ENCODE measurements at regions of chr14 and their contacts with region 1.

Region 1: GRCh38 chr14:71967704-71968103 is 35.5 kb downstream of the RGS6 start:
- DNase-seq: no peak
- H3K4me3 Mint-ChIP-seq: peak overlapping the region; percentile 63
- H3K27ac Mint-ChIP-seq: peak overlapping the region; percentile 90
- H3K4me1 Mint-ChIP-seq: peaks cover 11% of the 10 kb centered on the region
- H3K27me3 Mint-ChIP-seq: peaks cover 8% of the 10 kb centered on the region

Region 2: DNA sequence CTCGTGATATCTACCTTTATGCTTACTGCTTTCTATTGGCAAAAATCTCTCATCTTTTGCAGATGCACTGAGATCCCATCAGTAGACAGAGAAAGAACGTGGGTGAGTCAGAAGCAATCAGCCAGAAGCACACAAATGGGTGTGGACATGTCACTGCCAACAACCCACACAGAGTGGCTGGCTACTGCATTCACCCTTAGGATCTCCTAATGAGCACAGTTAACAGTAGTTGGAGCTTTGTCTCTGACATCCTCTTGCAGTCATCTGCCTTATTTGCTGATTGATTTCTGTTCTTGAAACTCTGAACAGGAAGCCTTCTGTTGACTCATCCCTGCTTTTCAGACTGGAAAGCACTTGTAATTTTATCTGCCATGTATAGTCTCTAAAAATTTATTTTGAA is 81.8 kb after region 1 on chr14:
- intact Hi-C with region 1: loop called (anchors 2 kb)
- DNase-seq: peak; percentile 75
- H3K4me3 Mint-ChIP-seq: peak overlapping the region; percentile 40
- H3K27ac Mint-ChIP-seq: peak overlapping the region; percentile 79
- H3K4me1 Mint-ChIP-seq: peaks cover 17% of the 10 kb centered on the region
- H3K27me3 Mint-ChIP-seq: peaks cover 7% of the 10 kb centered on the region

Region 3: DNA sequence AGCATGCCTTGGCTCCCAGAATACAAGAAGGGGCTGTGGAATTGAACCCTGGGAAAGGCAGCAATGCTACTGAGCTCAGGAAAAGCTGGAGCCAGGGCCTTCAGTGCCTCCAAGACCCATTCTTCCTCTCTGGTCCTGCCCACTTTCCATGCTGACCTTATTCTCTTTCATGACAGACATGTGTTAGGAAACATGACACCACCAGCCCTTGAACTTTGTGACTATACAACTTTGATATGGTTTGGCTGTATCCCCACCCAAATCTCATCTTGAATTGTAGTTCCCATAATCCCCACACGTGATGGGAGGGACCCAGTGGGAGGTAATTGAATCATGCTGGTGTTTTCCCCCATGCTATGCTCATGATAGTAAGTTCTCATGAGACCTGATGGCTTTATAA is 518.0 kb after region 1 on chr14:
- intact Hi-C with region 1: no loop called
- DNase-seq: no peak
- H3K4me3 Mint-ChIP-seq: no peak overlapping the region
- H3K27ac Mint-ChIP-seq: no peak overlapping the region
- H3K4me1 Mint-ChIP-seq: peaks cover 15% of the 10 kb centered on the region
- H3K27me3 Mint-ChIP-seq: peaks cover 5% of the 10 kb centered on the region